Caco-2 (cell line): ENCODE measurements at regions of chr6 and their contacts with region 1.

Region 1: GRCh38 chr6:10837995-10838793 is at the start of gene MAK:
- DNase-seq: peak; percentile 92 to 93
- H3K4me3 ChIP-seq: peak within 1 kb of the TSS; percentile 52
- H3K4me3 Mint-ChIP-seq: peak within 1 kb of the TSS; percentile 89
- H3K27ac Mint-ChIP-seq: peak within 1 kb of the TSS; percentile 83
- H3K4me1 ChIP-seq: peaks cover 5% of the 10 kb centered on the region
- H3K4me1 Mint-ChIP-seq: no peaks in the 10 kb centered on the region
- H3K27me3 ChIP-seq: no peaks in the 10 kb centered on the region
- H3K27me3 Mint-ChIP-seq: peaks cover 12% of the 10 kb centered on the region
- CTCF ChIP-seq: no peak
- total RNA-seq, gene MAK: 0.14 and 0.16 TPM in 2 replicates

Region 2: DNA sequence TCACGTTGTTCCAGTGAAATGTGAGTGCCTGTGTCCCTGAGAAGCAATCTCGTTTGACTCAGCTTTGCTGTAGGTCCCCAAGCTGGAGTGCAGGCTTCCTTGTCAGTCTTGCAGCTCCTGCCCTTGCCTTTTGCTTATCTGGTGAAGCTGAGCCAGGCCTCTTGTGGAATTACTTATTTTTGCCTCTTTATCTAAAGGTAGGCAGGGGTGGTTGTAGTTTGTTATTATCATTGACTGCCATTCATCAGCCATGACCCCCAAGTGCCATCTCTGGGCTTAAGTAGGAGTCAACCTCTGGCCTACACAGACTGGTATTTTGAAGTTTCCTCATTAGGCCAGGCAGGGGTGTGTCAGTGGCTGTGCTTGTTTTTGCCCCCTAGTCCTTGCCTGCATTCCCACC is 88.5 kb before region 1 on chr6:
- CTCF ChIA-PET with region 1: no interaction called
- POLR2A ChIA-PET with region 1: no interaction called
- intact Hi-C with region 1: no loop called
- DNase-seq: no peak
- H3K4me3 ChIP-seq: no peak overlapping the region
- H3K4me3 Mint-ChIP-seq: peak overlapping the region; percentile 77
- H3K27ac Mint-ChIP-seq: no peak overlapping the region
- H3K4me1 ChIP-seq: peaks cover 23% of the 10 kb centered on the region
- H3K4me1 Mint-ChIP-seq: peaks cover 29% of the 10 kb centered on the region
- H3K27me3 ChIP-seq: no peaks in the 10 kb centered on the region
- H3K27me3 Mint-ChIP-seq: no peaks in the 10 kb centered on the region
- CTCF ChIP-seq: no peak

Region 3: GRCh38 chr6:10873313-10873712 is 35.1 kb after region 1 on chr6:
- CTCF ChIA-PET with region 1: no interaction called
- POLR2A ChIA-PET with region 1: no interaction called
- intact Hi-C with region 1: loop called (anchors 2 kb)
- DNase-seq: no peak
- H3K4me3 ChIP-seq: no peak overlapping the region
- H3K4me3 Mint-ChIP-seq: no peak overlapping the region
- H3K27ac Mint-ChIP-seq: no peak overlapping the region
- H3K4me1 ChIP-seq: peaks cover 9% of the 10 kb centered on the region
- H3K4me1 Mint-ChIP-seq: peaks cover 8% of the 10 kb centered on the region
- H3K27me3 ChIP-seq: no peaks in the 10 kb centered on the region
- H3K27me3 Mint-ChIP-seq: no peaks in the 10 kb centered on the region
- CTCF ChIP-seq: no peak

Region 4: DNA sequence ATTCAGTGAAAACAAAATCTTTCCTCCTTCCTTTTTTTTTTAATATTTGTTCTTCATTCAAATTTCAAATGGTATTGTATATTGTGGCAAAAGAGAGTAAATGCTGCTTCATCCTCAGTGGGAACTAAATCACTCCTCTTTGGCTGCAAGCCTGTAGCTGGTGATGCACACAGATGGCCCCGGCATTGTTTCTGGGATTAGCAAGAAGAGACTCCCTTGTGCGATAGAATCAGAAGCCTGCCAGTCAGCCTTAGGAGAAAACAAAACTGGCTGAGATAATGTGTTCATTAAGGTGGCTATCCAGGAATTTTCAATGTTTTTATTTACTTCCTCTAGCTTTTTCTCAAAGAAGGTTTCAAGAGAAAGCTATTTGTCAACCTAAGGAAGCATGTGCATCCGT is 226.6 kb after region 1 on chr6:
- CTCF ChIA-PET with region 1: no interaction called
- POLR2A ChIA-PET with region 1: no interaction called
- intact Hi-C with region 1: loop called (anchors 5 kb)
- DNase-seq: no peak
- H3K4me3 ChIP-seq: no peak overlapping the region
- H3K4me3 Mint-ChIP-seq: no peak overlapping the region
- H3K27ac Mint-ChIP-seq: no peak overlapping the region
- H3K4me1 ChIP-seq: peaks cover 36% of the 10 kb centered on the region
- H3K4me1 Mint-ChIP-seq: peaks cover 32% of the 10 kb centered on the region
- H3K27me3 ChIP-seq: no peaks in the 10 kb centered on the region
- H3K27me3 Mint-ChIP-seq: no peaks in the 10 kb centered on the region
- CTCF ChIP-seq: no peak